ENCODE measurements at regions of chr11 and their contacts with region 1.

Region 1: DNA sequence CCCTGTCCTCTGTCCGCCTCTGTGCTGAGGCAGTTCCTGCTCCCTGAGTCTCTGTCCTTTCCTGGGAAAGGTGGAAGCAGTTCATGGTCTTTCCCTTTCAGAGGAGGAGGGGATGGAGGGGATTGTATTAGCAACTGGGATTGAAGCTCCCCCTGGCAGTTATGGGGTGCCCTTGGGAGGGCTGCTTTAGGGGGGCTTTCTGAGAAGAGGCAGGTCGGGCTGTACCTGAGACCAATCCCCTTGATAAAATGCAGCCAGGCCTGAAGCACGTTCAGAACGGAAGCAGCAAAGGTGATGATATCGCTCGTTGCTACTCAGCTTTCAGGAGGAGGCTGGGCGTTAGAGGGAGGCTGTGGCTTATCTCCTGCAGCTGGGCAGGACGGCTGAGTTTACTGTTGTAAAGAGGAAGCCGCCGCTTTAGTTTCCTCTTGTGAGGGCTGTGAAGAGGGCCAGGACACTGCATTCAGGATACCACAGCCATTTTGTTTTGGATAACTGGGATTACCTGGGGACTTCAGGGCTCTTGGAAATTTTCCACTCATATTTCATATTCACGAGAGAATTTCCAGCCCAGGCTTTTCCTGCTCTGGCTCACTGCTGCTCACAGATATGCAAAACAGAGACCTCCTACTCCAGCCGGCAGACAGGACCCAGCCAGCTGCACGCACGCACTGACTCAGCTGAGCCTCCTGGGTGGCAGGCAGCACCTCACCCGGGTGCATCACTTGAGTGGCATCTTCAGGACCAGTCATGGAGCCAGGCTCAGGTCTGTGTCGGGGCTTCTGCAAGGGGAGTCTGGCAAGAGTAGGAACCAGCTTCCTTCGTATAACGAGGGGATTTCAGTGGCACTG is 798 bp downstream of the AMPD3 start:
- DNase-seq: peak; percentile 30 to 87 (median 74)
- ATAC-seq: peak; percentile 74
- H3K4me3 ChIP-seq: peak overlapping the region; percentile 52 to 54
- H3K4me3 Mint-ChIP-seq: peak overlapping the region; percentile 91
- H3K27ac ChIP-seq: peak overlapping the region; percentile 10 to 67
- H3K27ac Mint-ChIP-seq: peak overlapping the region; percentile 98
- H3K4me1 ChIP-seq: peaks cover 58% of the 10 kb centered on the region
- H3K4me1 Mint-ChIP-seq: peaks cover 81% of the 10 kb centered on the region
- H3K27me3 ChIP-seq: no peaks in the 10 kb centered on the region
- H3K27me3 Mint-ChIP-seq: no peaks in the 10 kb centered on the region
- CTCF ChIP-seq: no peak

Region 2: GRCh38 chr11:8688414-8689362 is 1767.2 kb before region 1 on chr11:
- CTCF ChIA-PET with region 1: no interaction called
- POLR2A ChIA-PET with region 1: no interaction called
- intact Hi-C with region 1: loop called (anchors 5 to 10 kb)
- DNase-seq: peak; percentile 51 to 90 (median 80)
- ATAC-seq: peak; percentile 78
- H3K4me3 ChIP-seq: peak overlapping the region; percentile 78 to 79
- H3K4me3 Mint-ChIP-seq: peak overlapping the region; percentile 93
- H3K27ac ChIP-seq: peak overlapping the region; percentile 71 to 83
- H3K27ac Mint-ChIP-seq: peak overlapping the region; percentile 93
- H3K4me1 ChIP-seq: peaks cover 29% of the 10 kb centered on the region
- H3K4me1 Mint-ChIP-seq: peaks cover 41% of the 10 kb centered on the region
- H3K27me3 ChIP-seq: no peaks in the 10 kb centered on the region
- H3K27me3 Mint-ChIP-seq: no peaks in the 10 kb centered on the region
- CTCF ChIP-seq: no peak

Region 3: GRCh38 chr11:10441652-10442503 is 14.0 kb before region 1 on chr11:
- CTCF ChIA-PET with region 1: interaction called, 5 read pairs
- POLR2A ChIA-PET with region 1: interaction called, 16 read pairs
- intact Hi-C with region 1: loop called in 1 of 2 experiments (anchors 2 kb)
- DNase-seq: peak in 2 of 9 experiments; percentile 30 to 55
- ATAC-seq: peak; percentile 69
- H3K4me3 ChIP-seq: no peak overlapping the region
- H3K4me3 Mint-ChIP-seq: peak overlapping the region; percentile 4
- H3K27ac ChIP-seq: peak overlapping the region in 1 of 2 experiments; percentile 39
- H3K27ac Mint-ChIP-seq: peak overlapping the region; percentile 82
- H3K4me1 ChIP-seq: peaks cover 24% of the 10 kb centered on the region
- H3K4me1 Mint-ChIP-seq: peaks cover 41% of the 10 kb centered on the region
- H3K27me3 ChIP-seq: no peaks in the 10 kb centered on the region
- H3K27me3 Mint-ChIP-seq: no peaks in the 10 kb centered on the region
- CTCF ChIP-seq: no peak

Region 4: DNA sequence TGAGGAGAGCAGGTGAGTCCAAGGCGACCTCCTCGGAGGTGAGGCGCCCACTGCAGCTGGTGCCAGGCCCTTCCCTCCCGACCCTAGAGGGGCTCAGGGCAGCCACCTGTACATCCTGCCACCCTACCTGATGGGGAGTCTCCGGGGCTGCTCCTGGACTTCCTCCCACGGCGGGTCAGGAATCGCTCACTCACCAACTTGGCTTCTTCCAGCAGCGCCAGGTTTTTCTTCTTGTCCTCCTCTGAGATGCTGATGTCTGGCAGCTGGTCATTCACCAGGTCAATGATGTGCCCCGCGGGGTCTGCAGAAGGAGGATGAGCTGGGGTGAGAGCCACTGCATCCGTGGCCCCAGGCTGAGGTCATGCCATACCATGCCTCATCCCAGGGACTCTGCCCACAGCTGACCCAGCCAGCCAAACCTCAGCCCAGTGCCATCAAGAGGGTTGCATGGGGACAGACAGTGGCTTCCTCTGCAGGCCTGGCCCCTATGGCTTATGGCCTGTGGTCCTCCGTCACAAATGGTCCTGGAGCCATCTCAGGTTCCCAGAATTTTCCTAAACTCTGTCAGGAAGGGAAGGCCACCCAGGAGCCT is 173.6 kb after region 1 on chr11:
- CTCF ChIA-PET with region 1: no interaction called
- POLR2A ChIA-PET with region 1: no interaction called
- intact Hi-C with region 1: no loop called
- DNase-seq: no peak
- ATAC-seq: no peak
- H3K4me3 ChIP-seq: no peak overlapping the region
- H3K4me3 Mint-ChIP-seq: no peak overlapping the region
- H3K27ac ChIP-seq: no peak overlapping the region
- H3K27ac Mint-ChIP-seq: no peak overlapping the region
- H3K4me1 ChIP-seq: peaks cover 11% of the 10 kb centered on the region
- H3K4me1 Mint-ChIP-seq: peaks cover 6% of the 10 kb centered on the region
- H3K27me3 ChIP-seq: no peaks in the 10 kb centered on the region
- H3K27me3 Mint-ChIP-seq: peaks cover 2% of the 10 kb centered on the region
- CTCF ChIP-seq: no peak

Region 5: DNA sequence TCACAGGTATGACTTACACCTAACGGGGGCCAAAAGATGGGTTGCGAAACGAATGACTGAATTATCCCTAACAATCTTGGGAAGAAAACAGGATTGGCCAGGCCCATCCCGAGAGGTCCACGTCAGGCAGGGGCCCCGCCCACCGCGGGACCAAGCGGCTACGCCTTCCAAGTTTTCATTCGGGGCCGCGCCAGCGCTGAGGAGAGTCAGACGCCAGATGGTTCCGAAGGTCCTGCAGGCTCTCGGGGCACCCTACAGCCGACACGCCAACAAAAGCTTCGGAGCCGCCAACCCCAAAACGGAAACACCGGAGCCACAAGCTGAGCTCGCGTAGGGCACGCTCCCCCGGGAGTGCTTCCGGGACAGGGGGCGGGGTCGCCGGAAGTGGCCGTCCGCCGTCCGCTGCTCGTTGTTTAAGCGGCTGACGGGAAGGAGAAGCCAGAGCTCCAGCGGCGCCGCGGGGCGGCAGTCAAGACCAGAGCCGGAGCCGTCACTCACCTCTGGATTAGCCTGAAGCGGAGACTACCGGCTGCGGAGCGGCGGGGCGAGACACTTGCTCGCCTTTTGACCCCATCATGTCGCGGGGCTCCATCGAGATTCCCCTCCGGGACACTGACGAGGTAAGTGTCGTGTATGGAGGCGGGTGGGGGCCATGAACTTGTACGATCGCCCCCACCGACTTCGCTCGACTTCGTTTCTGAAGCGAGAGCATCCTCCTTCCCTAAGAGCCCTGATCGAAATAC is 295.1 kb after region 1 on chr11 and contains the start of gene CTR9:
- CTCF ChIA-PET with region 1: no interaction called
- POLR2A ChIA-PET with region 1: no interaction called
- intact Hi-C with region 1: loop called (anchors 5 kb)
- DNase-seq: peak; percentile 77 to 95 (median 90)
- ATAC-seq: peak; percentile 85
- H3K4me3 ChIP-seq: peak within 1 kb of the TSS; percentile 93 to 98
- H3K4me3 Mint-ChIP-seq: peak within 1 kb of the TSS; percentile 97
- H3K27ac ChIP-seq: peak within 1 kb of the TSS; percentile 66 to 81
- H3K27ac Mint-ChIP-seq: peak within 1 kb of the TSS; percentile 94
- H3K4me1 ChIP-seq: peaks cover 14% of the 10 kb centered on the region
- H3K4me1 Mint-ChIP-seq: peaks cover 33% of the 10 kb centered on the region
- H3K27me3 ChIP-seq: no peaks in the 10 kb centered on the region
- H3K27me3 Mint-ChIP-seq: no peaks in the 10 kb centered on the region
- CTCF ChIP-seq: no peak
- total RNA-seq, gene CTR9: 45.9 to 49.2 TPM

Region 6: GRCh38 chr11:10857709-10858438 is 402.0 kb after region 1 on chr11 and contains the start of gene ZBED5:
- CTCF ChIA-PET with region 1: no interaction called
- POLR2A ChIA-PET with region 1: interaction called, 3 read pairs
- intact Hi-C with region 1: loop called (anchors 1 to 5 kb)
- DNase-seq: peak; percentile 91 to 98 (median 94)
- ATAC-seq: peak; percentile 90
- H3K4me3 ChIP-seq: peak within 1 kb of the TSS; percentile 68 to 93
- H3K4me3 Mint-ChIP-seq: peak within 1 kb of the TSS; percentile 98
- H3K27ac ChIP-seq: peak within 1 kb of the TSS; percentile 91 to 92
- H3K27ac Mint-ChIP-seq: peak within 1 kb of the TSS; percentile 99
- H3K4me1 ChIP-seq: peaks cover 23% of the 10 kb centered on the region
- H3K4me1 Mint-ChIP-seq: peaks cover 51% of the 10 kb centered on the region
- H3K27me3 ChIP-seq: no peaks in the 10 kb centered on the region
- H3K27me3 Mint-ChIP-seq: no peaks in the 10 kb centered on the region
- CTCF ChIP-seq: no peak
- total RNA-seq, gene ZBED5: 57.5 to 59.2 TPM

Region 7: GRCh38 chr11:11148104-11148509 is 692.2 kb after region 1 on chr11:
- CTCF ChIA-PET with region 1: no interaction called
- POLR2A ChIA-PET with region 1: no interaction called
- intact Hi-C with region 1: loop called in 1 of 2 experiments (anchors 10 kb)
- DNase-seq: peak in 4 of 9 experiments; percentile 26 to 52 (median 38)
- ATAC-seq: no peak
- H3K4me3 ChIP-seq: no peak overlapping the region
- H3K4me3 Mint-ChIP-seq: no peak overlapping the region
- H3K27ac ChIP-seq: no peak overlapping the region
- H3K27ac Mint-ChIP-seq: peak overlapping the region; percentile 79
- H3K4me1 ChIP-seq: peaks cover 42% of the 10 kb centered on the region
- H3K4me1 Mint-ChIP-seq: peaks cover 42% of the 10 kb centered on the region
- H3K27me3 ChIP-seq: no peaks in the 10 kb centered on the region
- H3K27me3 Mint-ChIP-seq: no peaks in the 10 kb centered on the region
- CTCF ChIP-seq: no peak